Motor neuron (in vitro differentiated cells): ENCODE measurements at regions of chr15 and their contacts with region 1.

Region 1: DNA sequence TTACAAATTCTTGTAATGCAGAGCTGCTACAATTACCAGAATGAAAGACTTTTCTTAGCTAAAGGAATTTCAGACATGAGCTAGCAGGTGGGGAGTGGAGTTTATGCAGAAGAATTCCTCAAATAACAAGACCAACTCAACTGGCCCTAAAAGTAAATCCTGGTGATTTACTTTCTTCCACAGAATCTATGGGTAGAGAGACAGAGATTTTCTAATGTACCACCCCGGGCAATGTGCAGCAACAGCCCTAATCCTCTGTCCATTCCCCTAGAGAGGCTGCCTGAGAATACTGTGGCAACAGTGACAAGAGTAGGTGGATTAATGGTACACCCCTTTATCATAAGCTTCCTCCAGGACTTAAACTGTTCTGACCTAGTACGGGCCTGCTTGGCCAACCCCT is 55.2 kb downstream of the AQR start:
- ATAC-seq: peak in 1 of 8 experiments; percentile 52
- H3K4me3 ChIP-seq: no peak overlapping the region
- H3K27ac ChIP-seq: no peak overlapping the region
- H3K4me1 ChIP-seq: no peaks in the 10 kb centered on the region

Region 2: GRCh38 chr15:34616613-34617012 is 297.7 kb before region 1 on chr15:
- in situ Hi-C with region 1: loop called in 2 of 9 experiments (anchors 10 to 25 kb)
- ATAC-seq: peak in 5 of 8 experiments; percentile 42 to 91 (median 87)
- H3K4me3 ChIP-seq: no peak overlapping the region
- H3K27ac ChIP-seq: no peak overlapping the region
- H3K4me1 ChIP-seq: peaks cover 0 to 4% of the 10 kb centered on the region in 2 donors

Region 3: DNA sequence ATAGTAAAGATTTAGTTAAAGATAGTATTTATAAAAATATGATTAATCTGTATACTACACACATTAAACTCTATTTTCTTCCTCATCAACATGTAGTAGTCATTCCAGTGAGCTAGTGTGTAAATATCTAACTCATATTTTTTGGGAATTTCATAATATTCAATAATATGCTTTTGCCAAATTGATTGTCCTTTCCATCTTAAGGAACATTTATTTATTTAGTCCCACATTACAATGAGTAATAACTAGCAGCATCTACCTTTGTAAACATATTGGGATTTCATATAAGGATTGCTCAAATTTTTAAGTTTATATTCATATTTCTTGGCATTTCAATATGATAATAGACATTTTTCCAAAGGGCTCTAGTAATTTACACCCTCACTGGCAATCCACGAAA is 277.0 kb before region 1 on chr15:
- in situ Hi-C with region 1: loop called in 1 of 9 experiments (anchors 10 kb)
- ATAC-seq: no peak
- H3K4me3 ChIP-seq: no peak overlapping the region
- H3K27ac ChIP-seq: no peak overlapping the region
- H3K4me1 ChIP-seq: no peaks in the 10 kb centered on the region